AG04449 (cell line): ENCODE measurements at regions of chr17 and their contacts with region 1.

Region 1: GRCh38 chr17:1122533-1123392 is 57.0 kb downstream of the ABR start:
- DNase-seq: no peak
- H3K4me3 ChIP-seq: no peak overlapping the region
- CTCF ChIP-seq: peak; percentile 86

Region 2: DNA sequence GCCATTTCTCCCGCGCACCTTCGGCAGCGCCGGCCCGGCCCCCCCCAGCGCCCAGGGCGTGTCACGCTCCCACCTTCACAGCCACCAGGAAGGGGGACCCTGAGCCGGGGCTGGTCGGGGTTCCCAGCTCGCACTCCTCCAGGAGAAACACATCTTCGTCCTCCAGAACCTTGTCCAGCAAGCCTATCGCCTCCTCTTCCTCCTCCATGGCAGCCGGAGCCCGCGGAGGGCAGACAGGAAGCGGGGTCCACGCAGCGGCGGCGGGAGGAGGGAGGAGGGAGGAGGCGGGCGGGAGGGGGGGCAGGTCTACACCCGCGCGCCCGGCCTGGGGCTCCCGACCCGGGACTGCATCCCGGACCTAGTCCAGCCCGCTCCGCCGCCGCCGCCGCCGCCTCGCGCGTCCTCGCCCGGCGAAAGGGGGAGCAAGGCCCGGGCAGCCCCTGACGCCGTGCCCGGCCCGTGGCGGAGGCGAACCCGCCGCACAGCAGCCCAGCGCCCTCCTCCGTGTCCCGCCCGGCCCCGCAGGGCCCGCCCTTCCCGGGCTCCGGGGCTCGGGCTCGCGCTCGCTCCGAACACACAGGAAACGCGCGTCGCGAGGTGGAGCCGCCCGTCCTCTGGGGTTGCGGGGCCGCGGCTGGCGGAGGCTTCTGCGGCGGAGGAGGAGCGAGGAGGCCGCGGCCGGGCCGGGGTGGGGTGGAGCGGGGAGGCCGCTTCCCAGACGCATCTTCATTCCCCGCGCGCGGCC is 13.7 kb before region 1 on chr17:
- CTCF ChIA-PET with region 1: interaction called, 34 read pairs
- POLR2A ChIA-PET with region 1: interaction called, 3 read pairs
- DNase-seq: no peak
- H3K4me3 ChIP-seq: peak overlapping the region; percentile 72
- CTCF ChIP-seq: no peak

Region 3: DNA sequence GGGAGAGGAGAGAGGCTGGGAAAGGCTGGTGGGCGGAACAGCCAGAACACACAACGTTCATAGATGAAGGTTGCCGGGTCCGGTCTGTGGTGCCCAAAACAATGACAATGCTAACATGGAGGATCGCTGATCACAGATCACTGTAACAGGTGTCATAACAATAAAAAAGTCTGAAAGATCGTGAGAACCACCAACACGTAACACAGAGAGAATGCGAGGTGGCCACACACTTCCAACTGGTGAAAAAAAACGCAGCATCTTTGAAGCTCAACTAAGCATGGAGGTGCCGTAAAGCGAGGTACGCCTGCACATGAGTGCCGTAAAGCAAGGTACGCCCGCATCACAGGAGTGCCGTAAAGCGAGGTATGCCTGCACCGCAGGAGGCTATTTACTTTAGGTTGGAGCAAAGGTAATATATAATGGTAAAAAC is 14.7 kb after region 1 on chr17:
- CTCF ChIA-PET with region 1: interaction called, 45 read pairs
- POLR2A ChIA-PET with region 1: no interaction called
- DNase-seq: no peak
- H3K4me3 ChIP-seq: no peak overlapping the region
- CTCF ChIP-seq: no peak

Region 4: GRCh38 chr17:1147661-1148060 is 24.9 kb after region 1 on chr17:
- CTCF ChIA-PET with region 1: interaction called, 38 read pairs
- POLR2A ChIA-PET with region 1: no interaction called
- DNase-seq: no peak
- H3K4me3 ChIP-seq: no peak overlapping the region
- CTCF ChIP-seq: peak; percentile 49

Region 5: DNA sequence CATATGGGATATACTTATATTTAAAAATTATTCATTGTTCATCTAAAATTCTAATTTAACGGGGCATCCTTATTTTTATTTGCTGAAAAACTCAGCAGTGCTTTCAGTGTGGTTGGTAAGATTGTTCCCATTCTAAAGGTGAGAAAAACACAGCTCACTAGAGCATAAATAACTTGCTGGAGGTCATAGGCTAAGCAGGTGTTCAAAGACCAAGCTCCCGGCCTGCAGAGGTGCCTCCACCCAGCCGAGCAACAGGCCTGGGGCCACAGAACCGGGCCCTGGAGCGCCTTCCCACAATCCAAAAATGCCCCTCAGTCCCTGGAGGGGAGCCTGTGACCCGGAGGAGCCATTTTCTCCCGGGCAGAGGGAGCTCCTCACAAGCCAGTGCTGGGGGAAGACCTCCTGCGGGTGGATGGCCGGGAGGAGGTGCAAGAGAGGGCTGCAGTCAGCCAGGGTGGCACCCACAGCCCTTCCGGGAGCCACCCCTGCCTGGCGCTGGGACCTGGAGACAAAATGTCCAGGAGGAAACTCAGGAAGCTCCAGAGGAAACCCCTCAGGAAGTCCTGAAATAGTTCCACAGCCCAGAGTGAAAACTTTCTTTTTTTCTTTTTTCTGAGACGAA is 42.3 kb after region 1 on chr17:
- CTCF ChIA-PET with region 1: interaction called, 13 read pairs
- POLR2A ChIA-PET with region 1: no interaction called
- DNase-seq: no peak
- H3K4me3 ChIP-seq: no peak overlapping the region
- CTCF ChIP-seq: no peak

Region 6: GRCh38 chr17:1179818-1180742 is 57.3 kb after region 1 on chr17 and contains the start of gene ABR:
- CTCF ChIA-PET with region 1: interaction called, 273 read pairs
- POLR2A ChIA-PET with region 1: no interaction called
- DNase-seq: no peak
- H3K4me3 ChIP-seq: peak within 1 kb of the TSS; percentile 74
- CTCF ChIP-seq: no peak

Region 7: GRCh38 chr17:1197781-1198490 is 75.2 kb after region 1 on chr17:
- CTCF ChIA-PET with region 1: interaction called, 273 read pairs
- POLR2A ChIA-PET with region 1: no interaction called
- DNase-seq: no peak
- H3K4me3 ChIP-seq: no peak overlapping the region
- CTCF ChIP-seq: no peak

Region 8: GRCh38 chr17:1299524-1300370 is 177.0 kb after region 1 on chr17:
- CTCF ChIA-PET with region 1: no interaction called
- POLR2A ChIA-PET with region 1: no interaction called
- DNase-seq: no peak
- H3K4me3 ChIP-seq: no peak overlapping the region
- CTCF ChIP-seq: no peak